Ascending aorta (tissue), 2 donors: ENCODE measurements at regions of chr11 and their contacts with region 1.

Region 1: DNA sequence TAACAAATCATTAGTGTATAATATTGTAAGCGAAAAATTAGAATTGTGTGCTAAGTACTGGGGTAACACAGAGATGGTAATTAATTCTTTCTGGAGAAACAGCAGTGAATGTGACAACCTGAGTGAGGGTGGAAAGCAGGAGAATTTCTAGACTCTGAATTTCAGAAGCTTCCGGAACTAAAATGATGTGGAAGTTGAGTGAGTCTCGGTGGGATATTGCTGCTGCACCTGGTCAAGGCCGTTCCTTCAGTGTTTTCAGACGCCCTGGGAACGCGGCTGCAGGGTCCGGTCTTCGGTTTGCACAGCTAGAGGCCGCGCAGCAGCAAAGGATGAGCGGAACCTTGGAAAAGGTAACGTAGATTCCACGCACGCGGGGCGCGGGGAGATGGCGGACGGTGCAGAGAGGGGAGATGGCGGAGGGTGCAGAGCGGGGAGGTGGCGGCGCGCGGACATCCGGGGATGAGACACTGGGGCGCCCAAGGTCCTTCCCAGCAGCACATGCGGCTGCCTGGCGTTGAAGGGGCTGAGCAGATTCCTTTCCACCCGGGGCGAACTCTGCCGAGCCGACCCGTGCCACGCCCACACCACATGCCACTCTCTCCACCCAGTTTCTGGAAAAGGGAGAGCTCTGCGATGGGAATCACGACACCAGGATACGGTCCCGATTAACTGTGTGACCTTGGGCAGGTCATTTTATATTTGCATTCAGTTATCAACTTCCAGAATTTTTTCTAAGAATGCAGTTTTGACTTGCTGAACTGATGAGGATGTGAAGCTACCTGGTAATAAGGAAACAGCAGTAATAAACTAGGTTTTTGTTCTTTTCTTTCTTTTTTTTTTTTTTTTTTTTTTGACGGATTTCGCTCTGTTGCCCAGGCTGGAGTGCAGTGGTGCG is at the start of gene MRPL48:
- DNase-seq: peak; percentile 36 to 93
- H3K4me3 ChIP-seq: peak within 1 kb of the TSS; percentile 67 to 83
- H3K27ac ChIP-seq: peak within 1 kb of the TSS; percentile 71 to 83
- H3K4me1 ChIP-seq: peaks cover 0 to 12% of the 10 kb centered on the region in 2 donors
- H3K27me3 ChIP-seq: no peaks in the 10 kb centered on the region
- CTCF ChIP-seq: no peak
- total RNA-seq, gene MRPL48: not detected

Region 2: GRCh38 chr11:73478738-73479347 is 309.0 kb before region 1 on chr11:
- intact Hi-C with region 1: no loop called
- DNase-seq: no peak
- H3K4me3 ChIP-seq: no peak overlapping the region
- H3K27ac ChIP-seq: no peak overlapping the region
- H3K4me1 ChIP-seq: no peaks in the 10 kb centered on the region
- H3K27me3 ChIP-seq: no peaks in the 10 kb centered on the region
- CTCF ChIP-seq: peak in 1 of 3 experiments; percentile 36

Region 3: DNA sequence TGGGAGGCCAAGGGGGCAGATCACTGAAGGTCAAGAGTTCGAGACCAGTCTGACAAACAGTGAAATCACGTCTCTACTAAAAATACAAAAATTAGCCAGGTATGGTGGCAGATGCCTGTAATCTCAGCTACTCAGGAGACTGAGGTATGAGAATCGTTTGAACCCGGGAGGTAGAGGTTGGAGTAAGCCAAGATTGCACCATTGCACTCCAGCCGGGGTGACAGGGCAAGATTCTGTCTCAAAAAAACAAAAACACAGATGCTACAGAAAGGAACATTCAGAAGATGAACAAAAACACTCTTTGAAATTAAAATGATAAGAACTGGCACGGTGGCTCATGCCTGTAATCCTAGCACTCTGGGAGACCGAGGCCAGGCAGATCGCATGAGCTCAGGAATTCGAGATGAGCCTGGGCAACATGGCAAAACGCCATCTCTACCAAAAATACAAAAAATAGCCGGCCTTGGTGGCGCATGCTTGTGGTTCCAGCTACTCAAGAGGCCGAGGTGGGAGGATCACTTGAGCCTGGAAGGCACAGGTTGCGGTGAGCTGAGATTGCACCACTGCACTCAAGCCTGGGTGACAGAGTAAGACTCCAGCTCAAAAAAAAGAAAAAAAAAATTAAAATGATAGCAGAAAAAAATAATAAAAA is 35.5 kb before region 1 on chr11:
- intact Hi-C with region 1: loop called (anchors 5 kb)
- DNase-seq: no peak
- H3K4me3 ChIP-seq: no peak overlapping the region
- H3K27ac ChIP-seq: no peak overlapping the region
- H3K4me1 ChIP-seq: peaks cover 0 to 6% of the 10 kb centered on the region in 2 donors
- H3K27me3 ChIP-seq: no peaks in the 10 kb centered on the region
- CTCF ChIP-seq: no peak

Region 4: GRCh38 chr11:73876424-73877300 is 88.8 kb after region 1 on chr11 and contains the starts of genes COA4 and PAAF1:
- intact Hi-C with region 1: loop called (anchors 5 kb)
- DNase-seq: peak; percentile 79 to 96
- H3K4me3 ChIP-seq: peak within 1 kb of the TSS; percentile 73 to 86
- H3K27ac ChIP-seq: peak within 1 kb of the TSS; percentile 82 to 86
- H3K4me1 ChIP-seq: peaks cover 3 to 15% of the 10 kb centered on the region in 2 donors
- H3K27me3 ChIP-seq: no peaks in the 10 kb centered on the region
- CTCF ChIP-seq: no peak
- total RNA-seq, gene COA4: 92.7 TPM
- total RNA-seq, gene PAAF1: 36.3 TPM